Esophagus squamous epithelium (tissue), 5 donors: ENCODE measurements at regions of chr16 and their contacts with region 1.

Region 1: GRCh38 chr16:83826146-83826913 is 18.6 kb downstream of the HSBP1 start:
- DNase-seq: no peak
- H3K4me3 ChIP-seq: no peak overlapping the region
- H3K27ac ChIP-seq: no peak overlapping the region
- H3K4me1 ChIP-seq: peaks cover 0 to 10% (median 0%) of the 10 kb centered on the region in 3 donors
- H3K27me3 ChIP-seq: peaks cover 0 to 17% (median 0%) of the 10 kb centered on the region in 4 donors
- CTCF ChIP-seq: peak; percentile 81 to 95 (median 92)
- POLR2A ChIP-seq: no peak

Region 2: GRCh38 chr16:83878838-83879237 is 52.5 kb after region 1 on chr16:
- intact Hi-C with region 1: loop called (anchors 10 kb)
- DNase-seq: no peak
- H3K4me3 ChIP-seq: no peak overlapping the region
- H3K27ac ChIP-seq: no peak overlapping the region
- H3K4me1 ChIP-seq: no peaks in the 10 kb centered on the region
- H3K27me3 ChIP-seq: peaks cover 0 to 18% (median 0%) of the 10 kb centered on the region in 4 donors
- CTCF ChIP-seq: peak in 4 of 6 experiments; percentile 26 to 42 (median 40)
- POLR2A ChIP-seq: no peak

Region 3: DNA sequence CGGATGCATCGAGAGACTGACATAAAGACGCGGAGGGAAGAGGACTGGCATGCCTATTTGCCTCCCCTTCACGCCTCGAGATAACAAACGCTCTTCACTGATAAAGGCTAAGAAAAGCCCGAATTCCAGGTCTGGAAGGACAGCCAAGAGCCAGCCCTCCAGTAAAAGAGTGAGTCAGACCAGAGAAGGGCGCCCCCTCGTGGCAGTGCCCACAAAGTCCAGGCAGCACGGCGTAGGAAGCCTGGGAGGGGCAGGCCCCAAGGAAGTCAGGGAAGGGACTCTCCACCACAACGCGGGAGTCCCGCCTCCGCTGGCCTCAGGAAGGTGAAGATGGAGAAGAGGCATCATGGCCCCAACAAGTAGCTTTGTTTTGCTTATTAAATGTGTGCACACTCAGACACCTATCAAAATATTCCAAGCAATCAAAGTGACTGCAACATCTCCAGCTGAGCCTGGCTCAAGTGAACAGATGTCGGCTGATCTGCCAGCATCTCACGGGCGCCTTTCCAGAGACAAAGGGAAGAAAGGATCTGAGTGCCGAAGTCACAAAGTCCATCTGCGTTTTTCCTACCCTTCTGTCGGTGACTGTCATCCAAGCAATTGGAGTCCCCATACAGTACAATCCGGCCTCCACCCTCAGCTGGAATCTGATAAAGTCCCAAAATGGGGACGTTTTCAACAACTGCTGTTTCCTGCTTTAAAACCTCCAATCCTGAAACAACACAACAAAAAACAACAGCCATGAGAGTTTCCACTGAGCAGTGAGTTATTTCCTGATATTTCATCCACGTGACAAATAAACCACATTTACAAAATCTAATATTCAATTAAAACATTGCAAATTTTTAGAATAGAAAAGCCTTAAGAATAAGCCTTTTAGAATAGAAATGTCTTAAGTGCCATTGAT is 236.7 kb after region 1 on chr16:
- intact Hi-C with region 1: loop called (anchors 10 kb)
- DNase-seq: no peak
- H3K4me3 ChIP-seq: no peak overlapping the region
- H3K27ac ChIP-seq: peak overlapping the region in 1 of 4 donors; percentile 25
- H3K4me1 ChIP-seq: peaks cover 0 to 8% (median 0%) of the 10 kb centered on the region in 3 donors
- H3K27me3 ChIP-seq: no peaks in the 10 kb centered on the region
- CTCF ChIP-seq: peak; percentile 41 to 86 (median 76)
- POLR2A ChIP-seq: no peak